ENCODE measurements at regions of chr6 and their contacts with region 1.

Region 1: GRCh38 chr6:29752451-29753308 is 29.4 kb downstream of the HLA-F start:
- DNase-seq: peak; percentile 91
- ATAC-seq: peak; percentile 63
- H3K4me3 ChIP-seq: peak overlapping the region; percentile 57 to 94 (median 84)
- H3K4me3 Mint-ChIP-seq: peak overlapping the region; percentile 97
- H3K27ac ChIP-seq: peak overlapping the region; percentile 76 to 83
- H3K27ac Mint-ChIP-seq: peak overlapping the region; percentile 97
- H3K4me1 ChIP-seq: peaks cover 22 to 29% of the 10 kb centered on the region in 2 donors
- H3K4me1 Mint-ChIP-seq: peaks cover 47% of the 10 kb centered on the region
- H3K27me3 ChIP-seq: no peaks in the 10 kb centered on the region
- H3K27me3 Mint-ChIP-seq: no peaks in the 10 kb centered on the region
- CTCF ChIP-seq: peak; percentile 97

Region 2: DNA sequence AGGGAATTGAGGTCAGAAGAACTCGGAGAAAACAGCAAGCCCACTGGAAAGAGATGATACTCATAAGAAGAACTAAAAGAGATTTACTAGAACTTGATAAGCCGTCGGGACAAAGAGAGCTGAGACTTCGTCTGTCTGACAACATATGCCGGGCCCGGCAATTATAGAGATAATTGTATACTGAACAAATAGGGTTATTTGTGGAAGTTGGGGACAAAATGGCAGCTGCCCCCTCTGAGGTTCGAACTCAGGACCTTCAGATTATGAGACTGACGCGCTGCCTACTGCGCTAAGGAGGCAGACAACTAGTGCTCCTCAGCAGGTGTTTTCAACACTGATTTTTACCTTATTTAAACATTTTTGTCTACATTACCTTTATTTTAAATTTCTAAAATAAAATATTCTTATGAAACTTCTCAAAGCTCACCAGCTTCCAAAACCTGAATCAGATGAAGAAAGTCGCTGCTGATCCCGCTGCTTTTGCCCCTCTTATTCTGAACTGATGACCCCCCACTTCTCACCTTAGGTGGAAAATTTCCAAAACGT is 799.6 kb before region 1 on chr6:
- CTCF ChIA-PET with region 1: no interaction called
- POLR2A ChIA-PET with region 1: no interaction called
- intact Hi-C with region 1: no loop called
- DNase-seq: peak; percentile 68
- ATAC-seq: peak; percentile 45
- H3K4me3 ChIP-seq: peak overlapping the region in 4 of 5 experiments; percentile 1 to 54 (median 39)
- H3K4me3 Mint-ChIP-seq: peak overlapping the region; percentile 77
- H3K27ac ChIP-seq: no peak overlapping the region
- H3K27ac Mint-ChIP-seq: peak overlapping the region; percentile 20
- H3K4me1 ChIP-seq: peaks cover 10 to 11% of the 10 kb centered on the region in 2 donors
- H3K4me1 Mint-ChIP-seq: peaks cover 15% of the 10 kb centered on the region
- H3K27me3 ChIP-seq: peaks cover 0 to 27% (median 7%) of the 10 kb centered on the region in 4 experiments
- H3K27me3 Mint-ChIP-seq: peaks cover 23% of the 10 kb centered on the region
- CTCF ChIP-seq: no peak

Region 3: DNA sequence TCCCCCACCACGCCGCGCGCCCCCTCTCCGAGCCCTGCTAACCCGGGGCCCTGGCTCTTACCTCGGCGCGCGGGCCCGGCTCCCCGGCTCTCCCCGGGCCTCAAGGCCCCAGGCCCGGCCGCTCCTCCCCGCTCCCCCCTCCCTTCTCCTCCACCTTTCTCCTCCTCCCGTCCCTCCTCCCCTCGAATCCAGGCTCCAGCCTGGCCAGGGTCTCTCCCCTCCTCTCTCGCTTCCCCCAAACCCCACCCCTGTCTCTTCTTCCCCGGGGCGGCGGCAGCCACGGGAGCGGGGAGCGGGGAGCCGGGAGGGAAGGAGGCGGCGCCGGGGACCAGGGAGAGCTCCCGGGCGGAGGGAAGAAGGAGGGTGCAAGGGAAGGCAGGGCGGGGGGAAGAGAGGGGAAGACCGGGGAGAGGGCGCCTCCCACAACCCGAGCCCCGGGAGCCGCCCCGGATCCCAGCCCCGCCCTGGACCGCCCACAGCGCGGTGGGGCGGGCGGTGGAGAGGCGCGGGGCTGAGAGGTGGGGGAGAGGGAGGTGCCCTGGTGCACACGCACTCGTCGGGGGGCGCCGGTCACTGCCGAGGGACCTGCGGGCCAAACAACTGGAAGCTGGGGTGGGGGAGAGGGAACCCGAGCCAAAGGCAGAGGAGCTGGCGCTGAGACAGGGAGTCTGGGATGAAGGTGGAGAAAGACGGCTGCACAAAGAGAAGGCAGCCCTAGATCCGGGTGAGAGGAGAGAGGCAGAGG is 119.7 kb before region 1 on chr6 and contains the start of gene GABBR1:
- CTCF ChIA-PET with region 1: no interaction called
- POLR2A ChIA-PET with region 1: interaction called, 6 read pairs
- intact Hi-C with region 1: loop called (anchors 5 kb)
- DNase-seq: peak; percentile 78
- ATAC-seq: peak; percentile 82
- H3K4me3 ChIP-seq: peak within 1 kb of the TSS; percentile 45 to 96 (median 93)
- H3K4me3 Mint-ChIP-seq: peak within 1 kb of the TSS; percentile 94
- H3K27ac ChIP-seq: peak within 1 kb of the TSS; percentile 86
- H3K27ac Mint-ChIP-seq: peak within 1 kb of the TSS; percentile 99
- H3K4me1 ChIP-seq: peaks cover 33 to 63% of the 10 kb centered on the region in 2 donors
- H3K4me1 Mint-ChIP-seq: peaks cover 68% of the 10 kb centered on the region
- H3K27me3 ChIP-seq: no peaks in the 10 kb centered on the region
- H3K27me3 Mint-ChIP-seq: no peaks in the 10 kb centered on the region
- CTCF ChIP-seq: no peak
- total RNA-seq, gene GABBR1: 188 and 198 TPM in 2 replicates

Region 4: DNA sequence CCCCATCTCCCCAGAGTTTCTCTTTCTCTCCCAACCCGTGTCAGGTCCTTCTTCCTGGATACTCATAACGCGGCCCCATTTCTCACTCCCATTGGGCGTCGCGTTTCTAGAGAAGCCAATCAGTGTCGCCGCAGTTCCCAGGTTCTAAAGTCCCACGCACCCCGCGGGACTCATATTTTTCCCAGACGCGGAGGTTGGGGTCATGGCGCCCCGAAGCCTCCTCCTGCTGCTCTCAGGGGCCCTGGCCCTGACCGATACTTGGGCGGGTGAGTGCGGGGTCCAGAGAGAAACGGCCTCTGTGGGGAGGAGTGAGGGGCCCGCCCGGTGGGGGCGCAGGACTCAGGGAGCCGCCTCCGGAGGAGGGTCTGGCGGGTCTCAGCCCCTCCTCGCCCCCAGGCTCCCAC is 29.4 kb before region 1 on chr6 and contains the start of gene HLA-F:
- CTCF ChIA-PET with region 1: interaction called, 12 read pairs
- POLR2A ChIA-PET with region 1: interaction called, 6 read pairs
- intact Hi-C with region 1: no loop called
- DNase-seq: peak; percentile 96
- ATAC-seq: peak; percentile 91
- H3K4me3 ChIP-seq: peak within 1 kb of the TSS; percentile 75 to 100 (median 100)
- H3K4me3 Mint-ChIP-seq: peak within 1 kb of the TSS; percentile 96
- H3K27ac ChIP-seq: peak within 1 kb of the TSS; percentile 99 to 100
- H3K27ac Mint-ChIP-seq: peak within 1 kb of the TSS; percentile 98
- H3K4me1 ChIP-seq: peaks cover 29 to 43% of the 10 kb centered on the region in 2 donors
- H3K4me1 Mint-ChIP-seq: peaks cover 55% of the 10 kb centered on the region
- H3K27me3 ChIP-seq: no peaks in the 10 kb centered on the region
- H3K27me3 Mint-ChIP-seq: no peaks in the 10 kb centered on the region
- CTCF ChIP-seq: no peak
- total RNA-seq, gene HLA-F: 895 and 911 TPM in 2 replicates

Region 5: DNA sequence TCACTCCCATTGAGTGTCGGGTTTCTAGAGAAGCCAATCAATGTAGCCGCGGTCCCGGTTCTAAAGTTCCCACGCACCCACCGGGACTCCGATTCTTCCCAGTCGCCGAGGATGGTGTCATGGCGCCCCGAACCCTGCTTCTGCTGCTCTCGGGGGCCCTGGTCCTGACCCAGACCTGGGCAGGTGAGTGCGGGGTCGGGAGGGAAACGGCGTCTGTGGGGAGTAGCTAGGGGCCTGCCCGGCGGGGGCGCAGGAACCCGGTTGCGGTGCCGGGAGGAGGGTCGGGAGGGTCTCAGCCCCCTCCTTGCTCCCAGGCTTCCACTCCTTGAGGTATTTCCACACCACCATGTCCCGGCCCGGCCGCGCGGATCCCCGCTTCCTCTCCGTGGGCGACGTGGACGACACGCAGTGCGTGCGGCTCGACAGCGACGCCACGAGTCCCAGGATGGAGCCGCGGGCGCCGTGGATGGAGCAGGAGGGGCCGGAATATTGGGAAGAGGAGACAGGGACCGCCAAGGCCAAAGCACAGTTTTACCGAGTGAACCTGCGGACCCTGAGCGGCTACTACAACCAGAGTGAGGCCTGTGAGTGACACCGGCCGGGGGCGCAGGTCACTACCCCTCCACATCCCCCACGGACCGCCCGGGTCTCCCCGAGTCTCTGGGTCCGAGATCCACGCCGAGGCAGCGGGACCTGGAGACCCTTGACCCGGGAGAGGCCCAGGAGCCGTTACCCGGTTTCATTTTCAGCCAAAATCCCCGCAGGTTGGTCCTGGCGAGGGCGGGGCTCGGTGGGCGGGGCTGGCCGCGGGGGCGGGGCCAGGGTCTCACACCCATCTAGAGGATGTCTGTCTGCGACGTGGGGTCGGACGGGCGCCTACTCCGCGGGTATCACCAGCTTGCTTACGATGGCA is 39.7 kb after region 1 on chr6:
- CTCF ChIA-PET with region 1: no interaction called
- POLR2A ChIA-PET with region 1: no interaction called
- intact Hi-C with region 1: loop called (anchors 1 kb)
- DNase-seq: peak; percentile 84
- ATAC-seq: peak; percentile 89
- H3K4me3 ChIP-seq: peak overlapping the region; percentile 30 to 89 (median 85)
- H3K4me3 Mint-ChIP-seq: peak overlapping the region; percentile 91
- H3K27ac ChIP-seq: peak overlapping the region; percentile 56 to 90
- H3K27ac Mint-ChIP-seq: peak overlapping the region; percentile 80
- H3K4me1 ChIP-seq: peaks cover 5 to 16% of the 10 kb centered on the region in 2 donors
- H3K4me1 Mint-ChIP-seq: peaks cover 19% of the 10 kb centered on the region
- H3K27me3 ChIP-seq: peaks cover 0 to 30% (median 19%) of the 10 kb centered on the region in 4 experiments
- H3K27me3 Mint-ChIP-seq: peaks cover 41% of the 10 kb centered on the region
- CTCF ChIP-seq: no peak

Region 6: DNA sequence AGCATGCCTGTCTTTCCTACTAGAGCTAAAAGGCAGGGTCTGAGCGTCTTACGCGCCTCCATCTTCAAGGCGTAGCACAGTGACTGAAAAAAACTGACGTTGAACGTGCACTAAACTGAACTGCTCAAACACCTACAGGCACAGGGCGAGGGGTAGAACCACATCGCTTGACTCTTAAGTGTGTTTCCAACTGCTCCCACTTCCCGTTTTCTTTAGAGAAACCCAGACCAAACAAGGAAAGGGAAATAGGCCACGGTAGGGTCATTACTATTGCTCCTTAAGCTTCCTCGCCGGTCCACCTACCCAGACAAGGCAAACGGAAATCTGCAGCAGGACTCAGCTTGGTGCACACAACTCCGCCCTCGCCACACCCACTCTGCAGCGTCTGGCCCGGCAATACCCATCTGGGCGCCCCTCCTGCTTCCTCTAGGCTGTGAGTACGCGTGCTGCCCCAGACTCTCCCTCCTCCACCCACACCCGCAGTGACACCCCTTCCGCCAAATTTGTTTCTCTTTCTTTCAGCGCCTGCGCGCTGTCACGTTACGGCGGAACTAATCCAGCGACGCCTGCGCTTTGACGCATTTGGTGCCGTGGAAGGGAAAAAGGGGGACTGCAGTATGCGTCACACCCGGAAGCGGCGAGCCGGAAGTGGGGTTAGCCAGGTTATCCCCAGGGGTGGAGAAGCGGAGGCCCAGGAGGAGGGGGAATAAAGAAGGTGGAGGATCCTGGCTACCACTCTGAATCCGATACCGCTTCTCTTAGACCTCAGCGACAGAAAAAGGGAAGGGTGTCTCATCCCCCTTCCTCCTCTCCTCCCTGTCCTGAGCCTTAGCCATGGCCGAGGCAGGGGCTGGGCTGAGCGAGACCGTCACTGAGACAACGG is 314.1 kb after region 1 on chr6 and contains the start of gene PPP1R11:
- CTCF ChIA-PET with region 1: no interaction called
- POLR2A ChIA-PET with region 1: no interaction called
- intact Hi-C with region 1: loop called (anchors 2 kb)
- DNase-seq: peak; percentile 100
- ATAC-seq: peak; percentile 97
- H3K4me3 ChIP-seq: peak within 1 kb of the TSS; percentile 80 to 95 (median 85)
- H3K4me3 Mint-ChIP-seq: peak within 1 kb of the TSS; percentile 93
- H3K27ac ChIP-seq: peak within 1 kb of the TSS; percentile 93 to 97
- H3K27ac Mint-ChIP-seq: peak within 1 kb of the TSS; percentile 99
- H3K4me1 ChIP-seq: peaks cover 42 to 45% of the 10 kb centered on the region in 2 donors
- H3K4me1 Mint-ChIP-seq: peaks cover 51% of the 10 kb centered on the region
- H3K27me3 ChIP-seq: peaks cover 0 to 20% (median 9%) of the 10 kb centered on the region in 4 experiments
- H3K27me3 Mint-ChIP-seq: peaks cover 17% of the 10 kb centered on the region
- CTCF ChIP-seq: no peak
- total RNA-seq, gene PPP1R11: 44.8 and 49.5 TPM in 2 replicates

Measured in B cell (primary cell).